Mammary epithelial cell (primary cell): ENCODE measurements at regions of chr13 and their contacts with region 1.

Region 1: DNA sequence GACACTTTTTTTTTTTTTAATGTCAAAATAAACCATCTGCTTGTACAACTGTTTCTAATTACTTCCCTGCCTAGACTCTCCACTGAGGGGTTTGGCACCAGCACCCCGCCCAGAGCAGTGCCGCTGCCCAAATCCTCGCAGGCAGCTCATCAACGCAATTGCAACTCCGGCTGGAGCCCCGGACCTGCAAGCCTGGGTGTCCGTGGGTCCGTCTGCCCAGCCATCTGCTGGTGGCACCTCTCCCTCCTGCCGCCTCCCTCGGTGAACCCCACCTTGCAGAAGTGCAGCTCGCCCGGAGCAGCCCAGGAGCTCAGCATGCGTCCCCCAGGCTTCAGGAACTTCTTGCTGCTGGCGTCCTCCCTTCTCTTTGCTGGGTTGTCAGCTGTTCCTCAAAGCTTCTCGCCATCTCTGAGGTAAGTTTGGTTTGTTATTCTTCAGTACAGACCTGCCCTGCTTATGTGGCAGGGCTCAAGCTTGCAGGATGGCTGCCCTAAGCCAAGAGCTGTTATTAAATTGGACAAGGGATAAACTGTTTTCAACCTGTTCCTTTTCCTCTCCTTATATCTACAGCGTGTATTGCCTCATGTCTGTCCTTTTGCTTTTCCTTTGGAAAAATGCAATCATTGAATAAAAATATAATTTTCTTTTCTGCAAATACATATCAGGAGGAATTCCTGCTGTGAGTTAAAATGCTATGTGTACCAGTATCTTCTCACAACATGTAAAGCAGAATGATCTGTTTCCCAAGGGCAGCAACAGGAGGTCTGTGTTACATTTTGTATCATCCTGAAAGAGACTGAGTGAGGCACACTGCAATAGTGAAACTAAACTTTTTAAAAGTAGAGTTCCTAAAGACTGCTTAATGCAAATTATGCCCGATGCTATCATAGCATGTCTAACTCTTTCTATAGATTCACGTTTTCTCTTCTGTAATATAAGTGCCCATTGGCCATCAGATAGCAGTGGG is at the start of gene ITGBL1:
- DNase-seq: peak; percentile 55
- H3K4me3 ChIP-seq: peak within 1 kb of the TSS in 1 of 3 experiments; percentile 41
- H3K27ac ChIP-seq: peak within 1 kb of the TSS; percentile 99
- H3K4me1 ChIP-seq: peaks cover 72% of the 10 kb centered on the region
- H3K27me3 ChIP-seq: no peaks in the 10 kb centered on the region
- CTCF ChIP-seq: no peak
- total RNA-seq, gene ITGBL1: 5.5 to 16.7 TPM

Region 2: DNA sequence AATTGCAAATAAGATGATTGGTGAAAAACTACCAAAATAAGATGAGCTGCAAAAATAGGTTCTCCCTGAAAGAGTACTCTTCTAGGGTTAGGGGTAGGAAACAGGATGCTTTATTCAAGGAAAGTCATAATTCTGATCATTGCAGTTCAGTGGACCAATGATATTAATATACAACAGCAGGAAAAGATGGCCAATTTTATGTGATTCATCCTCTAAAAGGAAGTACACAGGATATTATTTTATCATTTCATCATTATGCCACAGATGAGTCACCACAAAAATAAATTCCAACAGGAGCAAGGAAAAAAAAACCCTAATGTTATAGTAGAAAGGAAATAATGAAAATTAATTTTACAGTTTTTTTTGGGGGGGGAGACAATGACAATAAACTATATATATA is 241.5 kb before region 1 on chr13:
- CTCF ChIA-PET with region 1: no interaction called
- dilution Hi-C with region 1: no loop called
- in situ Hi-C with region 1: no loop called
- intact Hi-C with region 1: loop called (anchors 2 kb)
- DNase-seq: peak; percentile 58
- H3K4me3 ChIP-seq: no peak overlapping the region
- H3K27ac ChIP-seq: peak overlapping the region; percentile 4
- H3K4me1 ChIP-seq: peaks cover 24% of the 10 kb centered on the region
- H3K27me3 ChIP-seq: no peaks in the 10 kb centered on the region
- CTCF ChIP-seq: no peak

Region 3: GRCh38 chr13:101267656-101268055 is 185.1 kb before region 1 on chr13:
- CTCF ChIA-PET with region 1: no interaction called
- dilution Hi-C with region 1: no loop called
- in situ Hi-C with region 1: no loop called
- intact Hi-C with region 1: no loop called
- DNase-seq: peak; percentile 32
- H3K4me3 ChIP-seq: no peak overlapping the region
- H3K27ac ChIP-seq: no peak overlapping the region
- H3K4me1 ChIP-seq: no peaks in the 10 kb centered on the region
- H3K27me3 ChIP-seq: no peaks in the 10 kb centered on the region
- CTCF ChIP-seq: no peak

Region 4: GRCh38 chr13:101289764-101290163 is 163.0 kb before region 1 on chr13:
- CTCF ChIA-PET with region 1: no interaction called
- dilution Hi-C with region 1: no loop called
- in situ Hi-C with region 1: no loop called
- intact Hi-C with region 1: loop called (anchors 5 kb)
- DNase-seq: peak; percentile 26
- H3K4me3 ChIP-seq: no peak overlapping the region
- H3K27ac ChIP-seq: no peak overlapping the region
- H3K4me1 ChIP-seq: no peaks in the 10 kb centered on the region
- H3K27me3 ChIP-seq: no peaks in the 10 kb centered on the region
- CTCF ChIP-seq: no peak

Region 5: DNA sequence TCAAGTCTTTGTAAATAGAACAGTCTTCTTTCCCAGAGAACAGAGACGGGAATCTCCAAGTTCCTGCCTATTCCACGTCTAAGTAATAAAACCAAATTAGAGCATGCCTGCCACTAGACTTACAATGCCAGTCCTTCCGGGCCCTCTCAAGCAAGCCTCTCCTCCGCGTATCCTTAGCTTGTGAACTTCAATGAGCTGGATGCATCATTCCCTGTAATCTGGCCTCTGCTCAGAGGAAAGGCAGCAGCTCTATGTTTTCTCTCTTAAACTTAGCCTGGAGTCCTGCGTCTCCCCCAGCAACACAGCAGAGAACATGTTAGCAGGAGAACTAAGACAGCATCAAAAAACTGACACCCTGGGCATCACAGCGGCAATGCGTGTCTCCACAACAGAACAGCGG is 44.6 kb before region 1 on chr13:
- CTCF ChIA-PET with region 1: no interaction called
- dilution Hi-C with region 1: no loop called
- in situ Hi-C with region 1: no loop called
- intact Hi-C with region 1: loop called (anchors 5 kb)
- DNase-seq: no peak
- H3K4me3 ChIP-seq: no peak overlapping the region
- H3K27ac ChIP-seq: no peak overlapping the region
- H3K4me1 ChIP-seq: peaks cover 7% of the 10 kb centered on the region
- H3K27me3 ChIP-seq: no peaks in the 10 kb centered on the region
- CTCF ChIP-seq: no peak

Region 6: DNA sequence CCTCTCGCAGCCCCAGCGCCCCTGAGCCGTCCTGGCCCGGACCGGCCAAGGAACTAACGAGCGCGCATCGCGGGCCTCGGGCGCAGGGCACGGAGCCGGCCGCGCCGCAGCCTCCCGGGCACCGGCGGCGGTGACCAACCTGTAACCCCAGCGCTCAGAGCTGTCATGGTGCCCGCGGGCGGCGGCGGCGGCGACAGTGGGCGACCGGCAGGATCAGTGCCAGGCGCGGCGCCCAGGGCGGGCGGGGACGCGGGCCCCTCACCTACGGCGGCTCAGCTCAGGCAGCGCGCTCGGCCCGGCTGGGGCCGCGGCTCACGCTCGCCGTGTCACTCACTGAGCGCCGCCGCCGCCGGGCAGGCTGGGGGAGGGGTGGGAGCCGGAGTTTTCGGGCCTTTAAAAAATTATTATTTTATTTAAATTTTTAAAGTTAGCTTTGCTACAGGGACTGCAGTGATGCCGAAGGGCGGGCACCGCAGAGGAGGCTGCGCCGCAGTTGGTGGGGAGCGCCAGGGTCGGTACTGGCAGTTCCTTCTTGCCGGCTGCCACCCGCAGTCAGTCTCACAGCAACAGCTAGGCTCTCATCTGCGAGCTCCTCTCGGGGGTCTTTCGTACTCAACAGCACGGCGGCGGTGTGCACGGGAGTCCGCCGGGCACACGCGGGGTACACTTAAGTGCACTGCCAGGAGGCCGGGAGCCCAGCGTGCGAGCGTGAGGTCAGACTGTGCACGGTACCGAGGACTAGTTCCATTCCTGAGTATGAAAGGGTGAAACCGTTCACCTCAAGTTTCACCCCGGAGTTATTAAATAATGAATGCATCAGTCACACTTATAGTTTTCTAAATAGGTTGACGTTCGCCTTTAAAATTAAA is 36.4 kb before region 1 on chr13 and contains the start of gene NALCN:
- CTCF ChIA-PET with region 1: no interaction called
- dilution Hi-C with region 1: no loop called
- in situ Hi-C with region 1: no loop called
- intact Hi-C with region 1: loop called (anchors 5 kb)
- DNase-seq: peak; percentile 14
- H3K4me3 ChIP-seq: peak within 1 kb of the TSS; percentile 53 to 71 (median 62)
- H3K27ac ChIP-seq: peak within 1 kb of the TSS; percentile 47
- H3K4me1 ChIP-seq: peaks cover 15% of the 10 kb centered on the region
- H3K27me3 ChIP-seq: no peaks in the 10 kb centered on the region
- CTCF ChIP-seq: no peak
- total RNA-seq, gene NALCN: 2.4 to 4.5 TPM

Region 7: GRCh38 chr13:101474419-101474957 is 21.7 kb after region 1 on chr13:
- CTCF ChIA-PET with region 1: interaction called, 5 read pairs
- dilution Hi-C with region 1: no loop called
- in situ Hi-C with region 1: no loop called
- intact Hi-C with region 1: loop called (anchors 2 kb)
- DNase-seq: no peak
- H3K4me3 ChIP-seq: no peak overlapping the region
- H3K27ac ChIP-seq: no peak overlapping the region
- H3K4me1 ChIP-seq: peaks cover 18% of the 10 kb centered on the region
- H3K27me3 ChIP-seq: no peaks in the 10 kb centered on the region
- CTCF ChIP-seq: peak; percentile 40 to 55

Region 8: GRCh38 chr13:101649490-101650126 is 196.8 kb after region 1 on chr13:
- CTCF ChIA-PET with region 1: no interaction called
- dilution Hi-C with region 1: no loop called
- in situ Hi-C with region 1: no loop called
- intact Hi-C with region 1: loop called (anchors 10 kb)
- DNase-seq: peak; percentile 87
- H3K4me3 ChIP-seq: no peak overlapping the region
- H3K27ac ChIP-seq: no peak overlapping the region
- H3K4me1 ChIP-seq: peaks cover 5% of the 10 kb centered on the region
- H3K27me3 ChIP-seq: no peaks in the 10 kb centered on the region
- CTCF ChIP-seq: no peak

Region 9: DNA sequence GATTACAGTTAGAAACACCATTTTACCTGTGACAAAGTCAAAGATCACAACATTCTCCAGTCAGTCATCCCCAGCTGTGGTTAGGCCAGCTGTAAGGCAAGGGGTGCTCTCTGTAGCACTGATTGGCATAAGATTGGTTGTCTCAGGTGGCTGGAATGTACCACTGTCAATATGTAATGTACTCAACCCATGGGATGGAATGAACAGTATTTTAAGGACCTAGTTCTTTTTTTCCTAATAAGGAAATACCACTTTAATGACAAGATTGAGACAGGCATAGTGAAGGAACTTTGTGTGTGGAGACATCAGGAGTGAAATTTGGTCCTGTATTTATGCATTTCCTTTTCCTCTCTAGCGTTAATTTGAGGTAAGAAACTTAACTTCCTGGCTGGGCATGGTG is 310.4 kb after region 1 on chr13:
- CTCF ChIA-PET with region 1: no interaction called
- dilution Hi-C with region 1: no loop called
- in situ Hi-C with region 1: no loop called
- intact Hi-C with region 1: no loop called
- DNase-seq: peak; percentile 6
- H3K4me3 ChIP-seq: no peak overlapping the region
- H3K27ac ChIP-seq: no peak overlapping the region
- H3K4me1 ChIP-seq: no peaks in the 10 kb centered on the region
- H3K27me3 ChIP-seq: peaks cover 4% of the 10 kb centered on the region
- CTCF ChIP-seq: no peak